ENCODE measurements at regions of chr12 and their contacts with region 1.

Region 1: DNA sequence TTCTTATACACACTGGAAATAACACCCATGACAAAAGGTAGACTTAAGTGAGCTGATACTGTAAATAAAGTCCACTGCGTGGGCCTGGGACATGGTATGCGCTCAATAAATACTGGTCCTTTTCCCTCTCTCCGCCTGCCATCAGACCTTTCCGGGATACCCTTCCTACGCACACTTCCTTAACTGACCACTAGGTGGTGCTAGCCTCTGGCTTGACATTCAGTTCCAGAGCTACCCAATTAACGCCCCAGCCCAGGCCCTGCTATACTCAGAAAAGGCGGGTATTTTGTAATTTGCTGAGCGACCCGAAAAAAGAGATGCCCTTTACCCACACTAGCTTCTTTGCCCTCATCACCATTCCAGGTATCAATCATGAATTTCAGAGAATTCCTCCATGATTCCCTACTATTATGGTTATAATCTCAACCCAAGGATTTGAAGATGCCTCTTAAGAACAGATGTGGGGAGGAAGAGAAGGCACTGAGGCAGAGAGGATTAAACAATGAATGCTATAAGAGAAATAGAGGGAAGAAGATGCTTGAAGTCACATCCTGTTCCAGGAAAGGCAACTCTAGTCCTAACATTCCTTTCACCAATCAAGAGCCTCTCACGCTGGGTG is 3.9 kb upstream of the LRP1 start:
- DNase-seq: peak; percentile 83
- ATAC-seq: peak; percentile 74
- H3K4me3 Mint-ChIP-seq: no peak overlapping the region
- H3K27ac Mint-ChIP-seq: no peak overlapping the region
- H3K4me1 Mint-ChIP-seq: peaks cover 8% of the 10 kb centered on the region
- H3K27me3 Mint-ChIP-seq: peaks cover 34% of the 10 kb centered on the region

Region 2: GRCh38 chr12:57139796-57140649 is 15.7 kb after region 1 on chr12:
- CTCF ChIA-PET with region 1: interaction called, 15 read pairs
- DNase-seq: no peak
- ATAC-seq: no peak
- H3K4me3 Mint-ChIP-seq: no peak overlapping the region
- H3K27ac Mint-ChIP-seq: no peak overlapping the region
- H3K4me1 Mint-ChIP-seq: no peaks in the 10 kb centered on the region
- H3K27me3 Mint-ChIP-seq: no peaks in the 10 kb centered on the region

Region 3: DNA sequence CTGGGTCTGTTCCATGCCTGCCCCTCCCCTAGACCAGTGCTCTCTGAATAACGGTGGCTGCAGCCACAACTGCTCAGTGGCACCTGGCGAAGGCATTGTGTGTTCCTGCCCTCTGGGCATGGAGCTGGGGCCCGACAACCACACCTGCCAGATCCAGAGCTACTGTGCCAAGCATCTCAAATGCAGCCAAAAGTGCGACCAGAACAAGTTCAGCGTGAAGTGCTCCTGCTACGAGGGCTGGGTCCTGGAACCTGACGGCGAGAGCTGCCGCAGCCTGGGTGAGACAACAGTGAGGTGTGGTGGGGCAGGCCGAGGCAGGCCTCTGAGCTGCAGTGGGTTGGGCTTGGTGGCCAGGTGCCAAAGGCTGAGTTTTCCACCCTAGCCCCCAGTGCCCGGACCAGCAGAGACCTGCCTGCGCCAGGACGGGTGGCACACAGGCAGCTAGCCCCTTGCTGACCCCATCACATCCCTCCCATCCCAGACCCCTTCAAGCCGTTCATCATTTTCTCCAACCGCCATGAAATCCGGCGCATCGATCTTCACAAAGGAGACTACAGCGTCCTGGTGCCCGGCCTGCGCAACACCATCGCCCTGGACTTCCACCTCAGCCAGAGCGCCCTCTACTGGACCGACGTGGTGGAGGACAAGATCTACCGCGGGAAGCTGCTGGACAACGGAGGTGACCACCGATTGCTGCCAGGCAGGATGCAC is 51.2 kb after region 1 on chr12:
- CTCF ChIA-PET with region 1: interaction called, 88 read pairs
- DNase-seq: peak; percentile 52
- ATAC-seq: no peak
- H3K4me3 Mint-ChIP-seq: no peak overlapping the region
- H3K27ac Mint-ChIP-seq: no peak overlapping the region
- H3K4me1 Mint-ChIP-seq: no peaks in the 10 kb centered on the region
- H3K27me3 Mint-ChIP-seq: no peaks in the 10 kb centered on the region

Region 4: GRCh38 chr12:57213058-57213715 is 88.8 kb after region 1 on chr12:
- CTCF ChIA-PET with region 1: interaction called, 15 read pairs
- DNase-seq: peak; percentile 89
- ATAC-seq: peak; percentile 57
- H3K4me3 Mint-ChIP-seq: no peak overlapping the region
- H3K27ac Mint-ChIP-seq: no peak overlapping the region
- H3K4me1 Mint-ChIP-seq: peaks cover 30% of the 10 kb centered on the region
- H3K27me3 Mint-ChIP-seq: peaks cover 41% of the 10 kb centered on the region

Region 5: DNA sequence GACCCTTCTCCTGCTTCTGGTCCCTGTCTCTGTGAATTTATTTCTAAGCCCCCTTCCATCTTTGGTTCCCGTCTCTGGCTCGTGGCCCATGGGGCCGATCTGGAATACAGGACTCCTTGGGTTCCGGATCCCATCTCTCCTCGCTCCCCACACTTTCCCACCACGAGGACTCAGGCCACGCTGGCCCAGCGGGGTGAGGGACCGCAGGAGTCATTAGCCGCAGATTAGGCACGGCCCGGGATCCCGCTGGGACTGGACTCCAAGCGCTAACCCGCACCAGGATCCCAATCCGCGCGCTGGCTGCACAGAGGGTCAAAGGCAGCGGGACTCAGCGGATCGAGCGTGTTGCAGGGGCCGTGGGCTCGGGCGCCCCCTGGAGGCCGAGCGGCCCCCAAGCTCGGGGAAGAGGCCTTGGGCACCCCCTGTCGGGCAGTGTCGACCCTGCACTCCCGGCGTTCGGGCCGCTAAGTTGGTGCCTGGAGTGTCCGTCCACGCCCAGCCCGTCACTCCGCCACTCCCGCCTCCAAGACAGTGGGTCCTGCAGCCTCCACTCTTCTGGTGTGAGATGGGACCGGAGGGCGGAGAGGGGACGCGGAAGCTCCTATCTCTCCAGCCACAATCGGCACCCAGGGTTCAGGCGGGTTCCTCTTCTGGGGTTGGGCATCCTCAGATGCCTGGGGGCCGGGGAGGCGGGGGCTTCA is 114.6 kb after region 1 on chr12:
- CTCF ChIA-PET with region 1: interaction called, 72 read pairs
- DNase-seq: peak; percentile 92
- ATAC-seq: peak; percentile 71
- H3K4me3 Mint-ChIP-seq: peak overlapping the region; percentile 84
- H3K27ac Mint-ChIP-seq: peak overlapping the region; percentile 79
- H3K4me1 Mint-ChIP-seq: peaks cover 50% of the 10 kb centered on the region
- H3K27me3 Mint-ChIP-seq: peaks cover 52% of the 10 kb centered on the region

Region 6: GRCh38 chr12:57272337-57273151 is 148.2 kb after region 1 on chr12:
- CTCF ChIA-PET with region 1: no interaction called
- DNase-seq: no peak
- ATAC-seq: no peak
- H3K4me3 Mint-ChIP-seq: no peak overlapping the region
- H3K27ac Mint-ChIP-seq: no peak overlapping the region
- H3K4me1 Mint-ChIP-seq: peaks cover 7% of the 10 kb centered on the region
- H3K27me3 Mint-ChIP-seq: no peaks in the 10 kb centered on the region